A673 (cell line): ENCODE measurements at regions of chr11 and their contacts with region 1.

Region 1: DNA sequence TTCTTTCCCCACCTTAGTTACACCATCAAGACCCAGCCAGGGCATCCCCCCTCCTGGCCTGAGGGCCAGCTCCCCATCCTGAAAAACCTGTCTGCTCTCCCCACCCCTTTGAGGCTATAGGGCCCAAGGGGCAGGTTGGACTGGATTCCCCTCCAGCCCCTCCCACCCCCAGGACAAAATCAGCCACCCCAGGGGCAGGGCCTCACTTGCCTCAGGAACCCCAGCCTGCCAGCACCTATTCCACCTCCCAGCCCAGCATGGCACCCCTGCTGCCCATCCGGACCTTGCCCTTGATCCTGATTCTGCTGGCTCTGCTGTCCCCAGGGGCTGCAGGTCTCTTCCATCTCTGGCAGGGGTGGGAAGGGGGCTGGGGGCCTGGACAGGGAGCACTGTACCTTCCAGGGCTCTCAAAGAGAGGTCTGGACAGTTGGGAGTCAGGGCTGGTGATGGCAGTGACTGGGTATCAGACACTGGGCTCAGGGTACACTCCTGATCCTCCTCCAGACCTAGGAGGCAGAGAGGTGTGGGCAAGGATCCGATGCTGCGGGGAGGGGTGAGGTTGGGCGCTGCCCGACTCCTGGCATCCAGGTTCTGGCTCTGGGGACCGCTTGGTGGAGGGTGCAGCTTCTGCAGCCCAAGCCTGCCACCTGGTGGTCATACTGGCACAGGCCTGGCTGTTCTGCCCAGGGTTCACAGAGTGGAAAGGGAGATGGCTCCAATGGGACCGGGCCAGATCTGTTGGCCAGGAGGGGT is at the start of gene UPK2:
- DNase-seq: peak; percentile 88
- H3K4me3 ChIP-seq: no peak within 1 kb of the TSS
- H3K27ac ChIP-seq: no peak within 1 kb of the TSS
- H3K4me1 ChIP-seq: no peaks in the 10 kb centered on the region
- H3K27me3 ChIP-seq: no peaks in the 10 kb centered on the region
- CTCF ChIP-seq: peak; percentile 99
- total RNA-seq, gene UPK2: not detected in 2 replicates

Region 2: DNA sequence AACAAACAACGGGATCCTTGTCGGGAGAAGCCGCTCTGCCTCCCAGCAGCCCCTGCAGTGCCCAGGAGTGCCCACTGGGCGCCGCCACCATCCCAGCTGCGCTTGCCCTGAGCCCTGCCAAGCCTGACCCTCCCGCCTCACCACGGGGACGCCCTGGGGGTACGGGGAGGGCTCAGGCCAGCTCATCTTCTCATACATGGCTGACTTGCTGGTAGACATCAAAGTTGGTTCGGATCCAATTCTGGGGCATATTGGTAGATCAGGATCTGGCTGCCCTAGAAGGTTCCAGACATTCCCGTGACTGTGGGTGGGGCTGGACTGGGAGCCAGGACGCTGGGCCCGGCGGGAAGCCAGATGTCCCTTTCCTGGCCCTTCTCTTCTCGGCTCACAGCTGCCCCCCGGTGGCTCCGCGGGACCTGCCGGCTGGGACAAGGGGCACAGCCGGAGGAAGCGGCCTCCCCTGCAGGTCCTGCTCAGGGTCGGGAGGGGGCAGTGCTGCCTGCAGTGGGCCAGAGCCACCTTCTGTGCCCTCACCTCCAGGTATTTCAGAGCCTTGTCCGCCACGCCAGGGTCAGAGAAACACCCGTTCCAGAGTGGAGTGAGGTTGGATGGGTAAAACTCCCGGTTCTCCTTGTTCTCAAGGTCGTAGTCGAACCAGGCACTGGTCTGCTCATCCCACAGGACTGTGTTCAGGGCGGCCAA is 266.3 kb before region 1 on chr11:
- CTCF ChIA-PET with region 1: interaction called, 3 read pairs
- POLR2A ChIA-PET with region 1: no interaction called
- intact Hi-C with region 1: loop called (anchors 2 kb)
- DNase-seq: peak; percentile 96
- H3K4me3 ChIP-seq: peak overlapping the region; percentile 41
- H3K27ac ChIP-seq: peak overlapping the region; percentile 69
- H3K4me1 ChIP-seq: peaks cover 4% of the 10 kb centered on the region
- H3K27me3 ChIP-seq: no peaks in the 10 kb centered on the region
- CTCF ChIP-seq: peak; percentile 96

Region 3: DNA sequence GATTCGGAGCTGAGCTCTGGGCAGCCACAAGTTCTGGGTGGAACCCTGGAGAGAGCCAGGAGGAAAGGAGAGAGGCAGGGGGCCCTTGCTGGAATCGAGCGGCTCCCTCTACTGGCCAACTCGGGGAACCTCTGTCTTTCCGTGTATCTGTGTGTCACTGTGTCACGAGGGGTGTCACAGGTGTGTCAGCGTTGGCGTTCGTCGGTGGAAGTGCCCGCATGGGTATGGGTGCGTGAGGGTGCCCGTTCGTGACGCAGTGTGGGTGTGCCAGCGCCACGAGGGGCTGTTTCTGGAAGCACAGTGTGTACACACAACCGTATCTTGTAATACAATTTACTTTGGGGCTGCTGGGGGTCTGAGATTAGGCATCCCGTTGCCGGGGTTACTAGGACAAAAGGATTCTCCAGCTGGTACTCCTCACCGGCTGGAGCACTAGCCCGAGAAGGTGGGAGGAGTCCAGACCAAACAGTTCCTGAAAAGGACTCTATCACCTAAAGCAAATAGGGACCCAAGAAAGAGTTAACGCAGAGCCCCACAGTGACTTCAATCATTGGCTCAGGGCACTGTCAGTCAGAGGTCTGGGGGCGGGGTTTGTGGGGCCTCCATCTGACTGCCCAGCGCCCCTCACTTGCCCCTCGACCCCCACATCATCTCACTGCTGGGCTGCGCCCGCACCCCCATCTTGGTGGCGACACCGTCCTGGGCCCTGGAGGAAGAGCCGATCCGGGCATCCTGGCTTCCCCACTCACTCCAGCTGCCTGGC is 28.0 kb before region 1 on chr11:
- CTCF ChIA-PET with region 1: interaction called, 17 read pairs
- POLR2A ChIA-PET with region 1: no interaction called
- intact Hi-C with region 1: no loop called
- DNase-seq: peak; percentile 97
- H3K4me3 ChIP-seq: peak overlapping the region; percentile 70
- H3K27ac ChIP-seq: peak overlapping the region; percentile 60
- H3K4me1 ChIP-seq: peaks cover 33% of the 10 kb centered on the region
- H3K27me3 ChIP-seq: no peaks in the 10 kb centered on the region
- CTCF ChIP-seq: peak; percentile 99